Breast epithelium (tissue), 4 donors: ENCODE measurements at regions of chr14 and their contacts with region 1.

Region 1: DNA sequence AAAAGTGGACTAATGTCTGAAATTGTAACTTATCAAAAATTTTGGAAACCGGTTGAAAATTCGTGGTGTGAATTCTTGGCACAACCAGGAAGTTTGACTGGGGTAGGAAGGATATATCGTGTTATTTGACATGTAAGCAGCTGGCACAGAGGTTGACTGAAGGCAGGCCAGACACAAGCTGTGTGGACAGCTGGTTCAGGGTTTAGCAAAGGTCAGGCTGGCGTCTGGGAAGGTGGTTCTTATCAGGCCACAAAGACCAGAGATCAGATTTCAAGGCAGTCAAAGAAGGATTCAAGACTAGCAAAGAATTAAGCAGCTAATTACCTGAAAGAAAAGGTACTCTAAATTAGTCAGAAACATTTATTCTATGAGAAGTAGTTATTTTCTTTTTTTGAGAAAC is 450.2 kb upstream of the MDGA2 start:
- DNase-seq: no peak
- H3K4me3 ChIP-seq: no peak overlapping the region
- H3K27ac ChIP-seq: no peak overlapping the region
- H3K4me1 ChIP-seq: no peaks in the 10 kb centered on the region
- H3K27me3 ChIP-seq: no peaks in the 10 kb centered on the region
- CTCF ChIP-seq: no peak
- POLR2A ChIP-seq: no peak

Region 2: DNA sequence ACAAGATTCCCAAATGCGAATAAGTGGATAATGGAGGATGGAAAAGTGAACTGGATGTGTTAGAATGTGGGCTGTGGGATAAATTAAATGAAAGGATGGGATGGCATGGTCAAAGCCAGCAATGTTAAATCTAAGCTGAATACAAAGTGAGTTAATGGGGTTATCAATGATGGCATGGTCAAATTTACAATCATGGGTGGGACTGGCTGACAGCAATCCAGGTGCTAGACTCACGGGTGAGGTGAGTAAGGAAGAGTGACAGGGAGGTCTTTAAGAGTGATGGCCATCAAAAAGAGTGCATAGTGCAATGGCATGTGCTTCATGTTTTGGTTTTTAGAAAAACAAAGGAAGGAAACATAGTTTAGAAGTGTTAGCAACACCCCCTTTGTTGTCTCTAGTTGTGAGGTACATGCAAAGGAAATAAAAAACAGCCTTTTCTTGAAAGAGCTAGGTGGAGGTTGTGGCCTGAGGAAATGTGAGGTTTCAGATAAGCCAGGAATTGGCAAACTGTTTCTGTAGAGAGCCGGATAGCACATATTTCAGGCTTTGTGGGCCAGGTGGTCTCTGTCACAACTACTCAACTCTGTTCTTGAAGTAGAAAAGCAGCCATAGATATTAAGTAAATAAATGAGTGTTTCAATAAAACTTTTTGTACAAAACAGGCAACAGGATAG is 1802.8 kb before region 1 on chr14:
- intact Hi-C with region 1: loop called (anchors 10 kb)
- DNase-seq: no peak
- H3K4me3 ChIP-seq: no peak overlapping the region
- H3K27ac ChIP-seq: no peak overlapping the region
- H3K4me1 ChIP-seq: no peaks in the 10 kb centered on the region
- H3K27me3 ChIP-seq: no peaks in the 10 kb centered on the region
- CTCF ChIP-seq: no peak
- POLR2A ChIP-seq: no peak